Activated naive CD4-positive, alpha-beta T cell treated with anti-CD3 and anti-CD28 coated beads for 36 hours (primary cell): ENCODE measurements at regions of chr13 and their contacts with region 1.

Region 1: DNA sequence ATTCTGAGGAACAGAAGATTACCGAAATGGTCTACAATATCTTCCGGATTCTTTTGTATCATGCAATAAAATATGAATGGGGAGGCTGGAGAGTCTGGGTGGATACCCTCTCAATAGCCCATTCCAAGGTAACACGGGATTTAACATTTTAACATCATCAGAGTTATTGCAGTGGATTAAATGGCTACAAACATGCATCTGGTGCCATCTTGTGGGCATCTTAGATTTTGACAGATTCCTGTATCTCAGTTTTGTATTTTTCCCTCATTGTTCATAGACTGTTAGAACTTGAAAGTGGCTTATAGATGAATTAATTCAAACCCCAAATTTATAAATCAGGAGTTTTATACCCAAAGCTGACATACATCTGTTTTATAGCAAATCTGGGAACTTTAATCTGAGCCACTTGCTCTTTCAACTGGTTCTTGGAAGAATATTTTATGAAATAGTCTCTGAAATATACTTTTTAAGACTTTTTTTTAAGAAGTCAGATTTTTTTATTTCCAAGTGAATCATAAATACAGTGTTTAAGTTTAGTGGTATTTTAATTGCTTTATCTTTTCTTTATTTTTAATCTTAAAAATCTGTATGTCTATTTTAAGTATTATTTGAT is 215.2 kb downstream of the NBEA start:
- DNase-seq: peak; percentile 53
- H3K4me3 Mint-ChIP-seq: no peak overlapping the region
- H3K27ac Mint-ChIP-seq: no peak overlapping the region
- H3K4me1 Mint-ChIP-seq: peaks cover 3% of the 10 kb centered on the region
- H3K27me3 Mint-ChIP-seq: no peaks in the 10 kb centered on the region

Region 2: GRCh38 chr13:33228648-33229445 is 1928.4 kb before region 1 on chr13:
- CTCF ChIA-PET with region 1: no interaction called
- intact Hi-C with region 1: loop called (anchors 2 kb)
- DNase-seq: peak; percentile 24
- H3K4me3 Mint-ChIP-seq: no peak overlapping the region
- H3K27ac Mint-ChIP-seq: no peak overlapping the region
- H3K4me1 Mint-ChIP-seq: peaks cover 8% of the 10 kb centered on the region
- H3K27me3 Mint-ChIP-seq: peaks cover 12% of the 10 kb centered on the region

Region 3: GRCh38 chr13:33931397-33932311 is 1225.6 kb before region 1 on chr13:
- CTCF ChIA-PET with region 1: no interaction called
- intact Hi-C with region 1: loop called (anchors 1 kb)
- DNase-seq: no peak
- H3K4me3 Mint-ChIP-seq: no peak overlapping the region
- H3K27ac Mint-ChIP-seq: no peak overlapping the region
- H3K4me1 Mint-ChIP-seq: no peaks in the 10 kb centered on the region
- H3K27me3 Mint-ChIP-seq: no peaks in the 10 kb centered on the region

Region 4: GRCh38 chr13:35191883-35192282 is 34.6 kb after region 1 on chr13:
- CTCF ChIA-PET with region 1: no interaction called
- intact Hi-C with region 1: no loop called
- DNase-seq: no peak
- H3K4me3 Mint-ChIP-seq: no peak overlapping the region
- H3K27ac Mint-ChIP-seq: no peak overlapping the region
- H3K4me1 Mint-ChIP-seq: no peaks in the 10 kb centered on the region
- H3K27me3 Mint-ChIP-seq: no peaks in the 10 kb centered on the region

Region 5: DNA sequence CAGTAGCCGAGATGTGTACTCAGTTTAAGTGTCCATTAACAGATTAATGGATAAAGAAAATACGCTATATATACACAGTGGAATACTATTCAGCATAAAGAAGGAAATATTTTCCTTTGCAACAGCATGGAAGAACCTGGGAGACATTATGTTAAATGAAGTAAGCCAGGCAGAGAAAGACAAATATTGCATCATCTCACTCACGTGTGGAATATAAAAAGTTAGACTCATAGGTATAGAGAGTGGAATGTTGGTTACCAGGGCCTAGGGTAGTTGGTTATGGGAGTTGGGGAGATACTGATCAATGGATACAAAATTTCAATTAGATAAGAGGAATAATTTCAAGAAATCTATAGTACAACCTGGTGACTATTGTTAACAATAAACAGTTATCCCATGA is 109.2 kb after region 1 on chr13:
- CTCF ChIA-PET with region 1: no interaction called
- intact Hi-C with region 1: no loop called
- DNase-seq: no peak
- H3K4me3 Mint-ChIP-seq: no peak overlapping the region
- H3K27ac Mint-ChIP-seq: no peak overlapping the region
- H3K4me1 Mint-ChIP-seq: no peaks in the 10 kb centered on the region
- H3K27me3 Mint-ChIP-seq: no peaks in the 10 kb centered on the region

Region 6: DNA sequence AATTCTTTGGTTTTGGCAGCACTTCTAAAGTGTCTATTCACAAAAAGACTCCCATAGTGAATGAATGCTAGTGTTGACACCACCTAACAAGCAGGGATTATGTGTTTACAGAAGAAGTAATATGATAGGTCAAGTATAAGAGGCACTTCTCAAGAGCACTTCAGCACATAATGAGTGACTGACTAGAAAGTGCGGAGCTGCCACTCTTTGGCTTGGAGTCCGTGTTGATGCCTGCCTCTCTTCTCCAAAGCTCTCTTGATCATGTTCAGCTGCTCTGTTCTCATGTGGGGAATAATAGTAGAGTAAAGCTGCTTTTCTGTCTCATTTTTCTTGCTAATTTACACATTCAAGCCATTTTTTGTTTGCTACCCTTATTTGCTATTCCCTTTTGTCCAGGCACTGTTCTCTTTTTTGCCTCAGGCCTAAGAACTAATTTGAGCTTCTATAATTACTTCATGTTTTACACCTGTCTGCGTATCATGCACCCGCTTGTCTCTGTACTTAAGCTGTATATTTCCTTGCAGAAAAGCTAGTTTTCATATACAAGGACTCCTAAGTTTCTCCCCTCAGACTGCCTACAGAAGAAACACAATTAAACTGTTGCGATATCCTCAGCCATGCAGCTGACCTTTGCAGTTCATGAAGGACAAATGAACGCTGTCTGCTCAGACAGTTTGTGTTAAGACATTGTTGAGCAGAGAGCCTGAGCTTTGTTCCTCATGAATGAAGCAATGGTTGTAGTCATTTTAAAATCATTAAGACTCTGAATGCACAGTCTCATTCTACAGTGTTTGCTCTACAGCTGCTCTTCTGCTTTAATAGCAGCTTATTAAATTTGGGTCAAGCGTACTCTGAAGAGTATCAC is 342.2 kb after region 1 on chr13:
- CTCF ChIA-PET with region 1: no interaction called
- intact Hi-C with region 1: no loop called
- DNase-seq: no peak
- H3K4me3 Mint-ChIP-seq: no peak overlapping the region
- H3K27ac Mint-ChIP-seq: no peak overlapping the region
- H3K4me1 Mint-ChIP-seq: no peaks in the 10 kb centered on the region
- H3K27me3 Mint-ChIP-seq: no peaks in the 10 kb centered on the region